Caco-2 (cell line): ENCODE measurements at regions of chr16 and their contacts with region 1.

Region 1: DNA sequence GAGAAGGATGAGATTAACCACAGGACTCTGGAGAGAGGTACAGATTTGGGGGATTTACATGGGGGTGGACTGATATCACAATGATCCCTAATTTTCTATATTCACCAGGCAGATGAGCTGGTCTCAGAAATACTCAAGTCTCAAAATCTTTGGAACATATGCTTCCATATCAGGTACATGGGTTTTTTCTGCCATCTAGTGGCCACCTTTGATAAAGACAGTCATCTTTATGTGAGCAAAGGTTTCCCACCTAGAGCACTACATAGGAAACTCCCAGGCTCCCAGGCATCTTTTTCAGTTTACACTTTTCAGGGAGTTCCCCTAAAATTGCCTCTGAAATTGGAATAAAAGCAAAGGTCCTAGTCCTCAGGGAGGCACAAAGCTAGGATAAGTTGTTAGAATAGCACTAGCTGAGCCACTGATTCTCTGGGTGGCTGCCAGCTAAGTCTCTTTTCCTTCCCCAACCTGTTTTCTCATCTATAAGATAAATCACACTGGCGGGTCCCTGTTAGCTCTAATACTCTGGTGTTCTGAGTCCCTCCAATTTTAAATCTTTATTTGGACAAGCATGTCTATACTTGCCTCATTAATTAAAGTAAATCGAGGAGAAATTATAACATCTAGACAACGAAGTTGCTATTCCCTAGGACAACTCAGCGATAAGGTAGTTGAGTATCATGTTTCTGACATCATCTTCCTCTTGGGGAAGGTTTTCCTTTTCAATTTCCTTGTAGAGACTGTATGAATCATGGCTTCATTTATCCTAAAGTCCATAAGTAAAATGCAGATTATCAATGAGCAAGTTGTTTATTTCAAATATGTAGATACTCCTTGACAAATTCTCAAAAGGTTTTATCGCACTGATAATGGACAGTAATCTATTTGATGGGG is 19.0 kb upstream of the MON1B start:
- DNase-seq: peak in 1 of 2 experiments; percentile 73
- H3K4me3 ChIP-seq: no peak overlapping the region
- H3K4me3 Mint-ChIP-seq: no peak overlapping the region
- H3K27ac Mint-ChIP-seq: no peak overlapping the region
- H3K4me1 ChIP-seq: no peaks in the 10 kb centered on the region
- H3K4me1 Mint-ChIP-seq: no peaks in the 10 kb centered on the region
- H3K27me3 ChIP-seq: no peaks in the 10 kb centered on the region
- H3K27me3 Mint-ChIP-seq: peaks cover 22% of the 10 kb centered on the region
- CTCF ChIP-seq: peak; percentile 72 to 79

Region 2: GRCh38 chr16:75789237-75789636 is 1382.8 kb before region 1 on chr16:
- CTCF ChIA-PET with region 1: interaction called, 3 read pairs
- POLR2A ChIA-PET with region 1: no interaction called
- intact Hi-C with region 1: loop called (anchors 2 kb)
- DNase-seq: peak in 1 of 2 experiments; percentile 65
- H3K4me3 ChIP-seq: no peak overlapping the region
- H3K4me3 Mint-ChIP-seq: no peak overlapping the region
- H3K27ac Mint-ChIP-seq: peak overlapping the region; percentile 17
- H3K4me1 ChIP-seq: no peaks in the 10 kb centered on the region
- H3K4me1 Mint-ChIP-seq: peaks cover 5% of the 10 kb centered on the region
- H3K27me3 ChIP-seq: no peaks in the 10 kb centered on the region
- H3K27me3 Mint-ChIP-seq: peaks cover 2% of the 10 kb centered on the region
- CTCF ChIP-seq: peak; percentile 81 to 90

Region 3: GRCh38 chr16:76278980-76279379 is 893.0 kb before region 1 on chr16:
- CTCF ChIA-PET with region 1: interaction called, 3 read pairs
- POLR2A ChIA-PET with region 1: no interaction called
- intact Hi-C with region 1: loop called (anchors 1 kb)
- DNase-seq: peak in 1 of 2 experiments; percentile 26
- H3K4me3 ChIP-seq: no peak overlapping the region
- H3K4me3 Mint-ChIP-seq: no peak overlapping the region
- H3K27ac Mint-ChIP-seq: no peak overlapping the region
- H3K4me1 ChIP-seq: no peaks in the 10 kb centered on the region
- H3K4me1 Mint-ChIP-seq: no peaks in the 10 kb centered on the region
- H3K27me3 ChIP-seq: no peaks in the 10 kb centered on the region
- H3K27me3 Mint-ChIP-seq: no peaks in the 10 kb centered on the region
- CTCF ChIP-seq: peak; percentile 32 to 44

Region 4: DNA sequence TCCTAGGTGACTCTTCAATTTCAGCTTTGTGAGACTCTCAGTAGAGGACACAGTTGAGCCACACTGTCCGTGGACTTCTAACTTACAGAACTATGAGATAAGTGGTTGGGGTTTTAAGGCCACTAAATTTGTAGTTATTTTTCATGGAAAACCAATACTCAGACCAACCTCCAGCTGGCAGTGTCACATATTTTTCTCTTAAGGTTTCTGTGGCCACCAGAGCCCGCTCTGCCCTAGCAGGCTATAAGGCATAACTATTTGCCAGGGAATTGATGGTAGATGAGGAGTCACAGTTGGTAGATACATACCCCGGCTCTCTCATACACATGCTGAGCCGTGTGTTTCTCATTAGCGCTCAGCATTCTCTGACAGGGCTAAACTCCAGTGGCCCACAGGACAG is 317.8 kb before region 1 on chr16:
- CTCF ChIA-PET with region 1: no interaction called
- POLR2A ChIA-PET with region 1: no interaction called
- intact Hi-C with region 1: loop called (anchors 1 kb)
- DNase-seq: peak in 1 of 2 experiments; percentile 5
- H3K4me3 ChIP-seq: no peak overlapping the region
- H3K4me3 Mint-ChIP-seq: no peak overlapping the region
- H3K27ac Mint-ChIP-seq: no peak overlapping the region
- H3K4me1 ChIP-seq: no peaks in the 10 kb centered on the region
- H3K4me1 Mint-ChIP-seq: no peaks in the 10 kb centered on the region
- H3K27me3 ChIP-seq: no peaks in the 10 kb centered on the region
- H3K27me3 Mint-ChIP-seq: peaks cover 3% of the 10 kb centered on the region
- CTCF ChIP-seq: peak; percentile 31 to 71

Region 5: DNA sequence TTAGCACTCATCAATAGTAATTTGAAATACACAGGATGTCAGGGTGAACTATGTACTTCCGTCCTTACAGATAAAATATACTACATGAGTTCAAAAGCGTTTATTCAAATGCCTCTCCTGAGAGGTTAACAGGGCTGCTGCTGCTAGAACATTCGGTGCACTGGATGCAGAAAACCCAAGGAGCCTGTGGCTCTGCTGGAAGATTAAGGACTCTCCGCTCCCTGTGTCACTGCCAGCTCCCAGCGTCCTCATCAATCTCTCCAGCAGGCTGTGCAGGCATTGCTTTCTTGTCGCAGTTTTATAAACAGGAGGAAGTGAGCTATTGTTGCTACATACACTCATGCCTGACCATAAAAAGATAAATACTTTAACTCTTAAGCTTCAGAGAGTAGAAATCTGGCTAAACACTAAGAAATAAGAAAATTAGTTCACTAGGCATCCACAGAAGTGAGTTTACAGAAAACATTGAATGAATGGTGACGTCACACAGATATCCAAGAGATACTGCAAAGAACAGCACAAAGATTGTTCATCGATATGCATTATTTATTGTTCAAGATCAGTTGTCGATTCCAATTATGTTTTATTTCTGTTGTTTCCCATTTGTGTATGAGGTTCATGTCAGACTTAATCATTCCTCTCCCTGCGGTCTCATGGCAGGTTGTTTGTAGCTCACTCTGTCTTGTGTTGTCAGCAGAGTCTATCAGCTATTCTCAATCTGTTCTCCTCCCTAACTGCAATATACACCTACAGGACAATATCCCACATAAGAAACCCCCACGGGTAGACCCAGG is 108.9 kb before region 1 on chr16:
- CTCF ChIA-PET with region 1: no interaction called
- POLR2A ChIA-PET with region 1: no interaction called
- intact Hi-C with region 1: loop called (anchors 10 kb)
- DNase-seq: no peak
- H3K4me3 ChIP-seq: no peak overlapping the region
- H3K4me3 Mint-ChIP-seq: no peak overlapping the region
- H3K27ac Mint-ChIP-seq: no peak overlapping the region
- H3K4me1 ChIP-seq: no peaks in the 10 kb centered on the region
- H3K4me1 Mint-ChIP-seq: no peaks in the 10 kb centered on the region
- H3K27me3 ChIP-seq: no peaks in the 10 kb centered on the region
- H3K27me3 Mint-ChIP-seq: peaks cover 12% of the 10 kb centered on the region
- CTCF ChIP-seq: no peak

Region 6: GRCh38 chr16:77133706-77134105 is 38.3 kb before region 1 on chr16:
- CTCF ChIA-PET with region 1: no interaction called
- POLR2A ChIA-PET with region 1: no interaction called
- intact Hi-C with region 1: no loop called
- DNase-seq: no peak
- H3K4me3 ChIP-seq: no peak overlapping the region
- H3K4me3 Mint-ChIP-seq: no peak overlapping the region
- H3K27ac Mint-ChIP-seq: no peak overlapping the region
- H3K4me1 ChIP-seq: no peaks in the 10 kb centered on the region
- H3K4me1 Mint-ChIP-seq: no peaks in the 10 kb centered on the region
- H3K27me3 ChIP-seq: no peaks in the 10 kb centered on the region
- H3K27me3 Mint-ChIP-seq: peaks cover 11% of the 10 kb centered on the region
- CTCF ChIP-seq: no peak